A673 (cell line): ENCODE measurements at regions of chr15 and their contacts with region 1.

Region 1: DNA sequence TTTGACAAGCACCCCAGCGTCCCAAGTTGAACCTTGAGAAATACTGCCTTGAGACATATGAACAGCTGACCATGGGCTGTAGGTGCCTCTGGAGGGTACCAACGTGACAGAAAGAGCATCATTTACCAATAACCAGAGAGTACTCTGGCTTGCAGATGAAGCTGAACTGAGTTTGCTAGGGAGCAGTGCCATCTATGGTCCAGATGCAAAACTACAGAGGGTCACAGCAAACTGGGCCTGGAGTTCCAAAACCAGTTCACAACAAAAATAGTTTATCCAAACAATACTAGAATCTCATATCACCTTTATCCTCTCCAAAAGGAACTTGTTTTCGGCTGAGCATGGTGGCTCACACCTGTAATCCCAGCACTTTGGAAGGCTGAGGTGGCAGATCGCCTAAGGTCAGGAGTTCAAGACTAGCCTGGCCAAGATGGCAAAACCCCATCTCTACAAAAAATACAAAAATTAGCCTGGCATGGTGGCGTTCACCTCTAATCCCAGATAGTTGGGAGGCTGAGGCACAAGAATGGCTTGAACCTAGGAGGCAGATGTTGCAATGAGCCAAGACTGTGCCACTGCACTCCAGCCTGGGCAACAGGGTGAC is 69.3 kb downstream of the CHAC1 start:
- DNase-seq: peak; percentile 61
- H3K4me3 ChIP-seq: no peak overlapping the region
- H3K27ac ChIP-seq: no peak overlapping the region
- H3K4me1 ChIP-seq: peaks cover 23% of the 10 kb centered on the region
- H3K27me3 ChIP-seq: no peaks in the 10 kb centered on the region
- CTCF ChIP-seq: peak; percentile 79

Region 2: GRCh38 chr15:40941528-40942336 is 80.9 kb before region 1 on chr15:
- CTCF ChIA-PET with region 1: no interaction called
- POLR2A ChIA-PET with region 1: no interaction called
- intact Hi-C with region 1: loop called (anchors 1 kb)
- DNase-seq: peak; percentile 81
- H3K4me3 ChIP-seq: peak overlapping the region; percentile 55
- H3K27ac ChIP-seq: peak overlapping the region; percentile 66
- H3K4me1 ChIP-seq: peaks cover 34% of the 10 kb centered on the region
- H3K27me3 ChIP-seq: no peaks in the 10 kb centered on the region
- CTCF ChIP-seq: peak; percentile 39

Region 3: GRCh38 chr15:41180206-41180789 is 157.7 kb after region 1 on chr15:
- CTCF ChIA-PET with region 1: no interaction called
- POLR2A ChIA-PET with region 1: no interaction called
- intact Hi-C with region 1: loop called (anchors 5 kb)
- DNase-seq: no peak
- H3K4me3 ChIP-seq: no peak overlapping the region
- H3K27ac ChIP-seq: no peak overlapping the region
- H3K4me1 ChIP-seq: no peaks in the 10 kb centered on the region
- H3K27me3 ChIP-seq: no peaks in the 10 kb centered on the region
- CTCF ChIP-seq: no peak